HEK293 (cell line): ENCODE measurements at regions of chr1 and their contacts with region 1.

Region 1: DNA sequence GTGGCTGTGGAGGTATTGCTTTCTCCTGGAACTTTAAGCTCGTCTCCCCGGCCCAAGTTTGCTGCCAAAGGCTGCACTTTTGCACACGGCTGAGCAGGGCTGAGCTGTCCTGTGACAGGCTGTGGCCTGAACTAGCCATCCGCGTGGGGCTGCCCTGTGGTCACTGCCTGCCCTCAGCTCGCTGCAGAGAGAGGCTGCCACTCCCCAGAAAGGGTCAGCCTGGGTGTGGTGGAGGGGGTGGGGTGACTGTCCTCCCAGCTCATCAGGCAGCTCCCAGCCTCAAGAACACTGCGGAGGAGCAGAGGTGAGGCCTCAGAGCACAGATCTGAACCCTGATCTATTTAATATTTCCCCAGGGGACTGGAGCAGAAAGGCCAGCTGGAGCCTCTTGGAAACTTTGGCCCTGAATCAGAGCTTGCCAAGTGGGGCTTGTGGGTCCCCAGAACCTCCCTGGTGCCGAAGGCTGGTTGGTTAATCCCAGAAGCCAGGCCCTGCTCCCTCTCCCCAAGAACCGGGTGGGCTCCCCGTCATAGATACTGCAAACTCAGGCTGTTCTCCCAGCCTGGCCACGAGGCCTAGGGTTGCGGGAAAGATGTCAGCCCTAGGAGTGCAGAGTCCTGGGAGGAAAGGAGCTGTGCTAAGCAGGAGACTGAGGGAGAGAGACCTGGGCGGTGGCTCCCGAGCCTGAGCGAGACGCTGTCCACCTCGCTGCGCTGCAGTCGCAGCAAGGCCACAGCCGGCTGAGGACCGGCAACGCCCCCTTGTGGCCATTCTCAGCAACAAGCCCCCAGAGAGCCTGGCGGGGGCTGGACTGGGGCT is 125.1 kb upstream of the IPO9 start:
- H3K4me3 ChIP-seq: no peak overlapping the region
- H3K27ac ChIP-seq: no peak overlapping the region
- H3K4me1 ChIP-seq: no peaks in the 10 kb centered on the region
- CTCF ChIP-seq: peak; percentile 95

Region 2: GRCh38 chr1:201536543-201536942 is 167.3 kb before region 1 on chr1:
- CTCF ChIA-PET with region 1: interaction called, 45 read pairs
- POLR2A ChIA-PET with region 1: no interaction called
- H3K4me3 ChIP-seq: no peak overlapping the region
- H3K27ac ChIP-seq: no peak overlapping the region
- H3K4me1 ChIP-seq: peaks cover 4% of the 10 kb centered on the region; the same call in 1 of the 2 replicates
- CTCF ChIP-seq: no peak

Region 3: GRCh38 chr1:201750939-201751338 is 47.1 kb after region 1 on chr1:
- CTCF ChIA-PET with region 1: no interaction called
- POLR2A ChIA-PET with region 1: no interaction called
- H3K4me3 ChIP-seq: no peak overlapping the region
- H3K27ac ChIP-seq: no peak overlapping the region
- H3K4me1 ChIP-seq: peaks cover 10% of the 10 kb centered on the region
- CTCF ChIP-seq: no peak

Region 4: DNA sequence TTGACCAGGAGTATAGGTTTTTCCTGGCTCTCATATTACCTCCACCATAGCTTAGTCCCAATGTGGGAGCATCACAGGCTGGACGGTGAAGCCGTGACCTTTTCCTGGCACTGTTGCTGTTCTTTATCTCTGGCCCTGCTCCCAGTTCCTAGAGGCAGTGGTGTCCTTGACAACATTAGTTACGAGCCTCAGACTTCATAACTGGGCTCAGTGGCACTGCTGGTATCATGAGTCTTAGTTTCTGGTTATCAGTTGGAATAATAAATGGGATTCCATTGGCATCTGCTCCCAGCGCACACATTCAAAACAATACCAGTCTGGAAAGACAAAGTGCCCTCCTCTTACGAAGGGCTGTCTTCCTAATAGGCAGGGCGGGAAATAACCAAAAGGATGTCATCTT is 286.6 kb after region 1 on chr1:
- CTCF ChIA-PET with region 1: no interaction called
- POLR2A ChIA-PET with region 1: no interaction called
- H3K4me3 ChIP-seq: no peak overlapping the region
- H3K27ac ChIP-seq: no peak overlapping the region
- H3K4me1 ChIP-seq: no peaks in the 10 kb centered on the region
- CTCF ChIP-seq: no peak